Mammary epithelial cell (primary cell): ENCODE measurements at regions of chr2 and their contacts with region 1.

Region 1: DNA sequence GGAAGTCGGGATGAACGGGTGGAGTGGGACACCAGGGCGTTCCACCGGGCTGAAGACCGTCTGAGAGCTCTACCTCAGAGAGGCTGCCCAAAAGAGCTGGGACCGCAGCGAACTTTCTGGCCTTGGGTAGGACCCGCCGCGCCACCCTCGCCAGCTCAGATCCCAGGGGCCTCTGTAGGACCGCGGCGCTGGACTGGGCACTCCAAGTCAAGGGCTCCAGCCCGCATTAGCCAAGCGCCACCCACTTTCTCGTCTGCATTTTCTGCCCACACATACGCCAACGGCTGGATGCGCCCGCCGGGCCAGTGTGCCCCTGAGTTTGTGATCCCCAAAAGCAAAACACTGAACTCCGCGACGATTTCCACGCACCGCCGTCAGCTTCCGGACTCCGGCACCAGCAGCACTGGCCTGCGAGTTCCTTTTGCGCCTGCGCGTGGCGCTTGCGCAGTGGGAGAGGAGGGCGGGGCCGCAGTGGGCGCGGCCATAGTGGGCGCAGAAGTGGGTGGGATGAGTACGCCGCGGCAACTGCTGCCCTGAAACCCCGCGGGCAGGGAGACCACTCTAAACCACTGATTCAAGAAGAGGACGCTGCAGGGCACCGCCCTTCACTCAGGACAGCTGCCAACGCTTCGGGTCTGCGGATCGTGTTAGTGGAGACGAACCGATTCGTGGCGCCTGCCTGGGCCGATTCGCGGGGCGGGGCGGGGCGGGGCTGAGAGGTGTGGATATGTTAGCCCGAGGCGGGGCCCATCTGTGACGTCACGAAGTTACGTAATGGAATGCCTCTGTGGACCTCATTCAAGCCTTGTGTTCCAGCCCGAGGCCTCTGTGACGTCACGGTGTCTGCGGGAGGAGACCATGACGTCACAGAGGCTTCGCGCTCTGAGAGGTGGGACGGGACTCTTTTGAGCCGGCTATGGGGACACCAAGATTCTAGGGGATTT is 10.5 kb downstream of the OSR1 start:
- DNase-seq: peak; percentile 93
- H3K4me3 ChIP-seq: peak overlapping the region; percentile 55 to 89 (median 83)
- H3K27ac ChIP-seq: peak overlapping the region; percentile 91
- H3K4me1 ChIP-seq: peaks cover 5% of the 10 kb centered on the region
- H3K27me3 ChIP-seq: no peaks in the 10 kb centered on the region
- CTCF ChIP-seq: no peak

Region 2: DNA sequence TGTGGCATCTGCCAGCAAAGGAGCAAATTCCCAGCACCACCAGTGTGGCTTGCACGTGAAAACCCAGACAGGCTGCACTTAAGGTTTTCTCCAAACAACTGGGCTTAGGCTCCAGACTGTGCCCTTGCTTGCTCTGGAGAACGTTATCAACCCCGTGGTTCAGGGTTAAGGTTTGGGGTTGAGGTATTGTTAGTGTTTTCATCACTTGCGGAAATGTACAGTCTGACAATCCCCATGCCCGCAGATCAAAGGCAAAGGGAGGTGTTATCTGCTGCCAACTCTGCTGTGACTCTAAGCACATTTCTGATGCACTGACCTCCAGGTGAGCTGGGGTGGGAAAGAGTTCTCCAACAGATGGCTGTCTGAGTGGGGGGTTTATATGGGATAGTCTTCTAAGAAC is 505.1 kb before region 1 on chr2:
- CTCF ChIA-PET with region 1: no interaction called
- dilution Hi-C with region 1: no loop called
- in situ Hi-C with region 1: no loop called
- intact Hi-C with region 1: loop called (anchors 1 kb)
- DNase-seq: no peak
- H3K4me3 ChIP-seq: no peak overlapping the region
- H3K27ac ChIP-seq: no peak overlapping the region
- H3K4me1 ChIP-seq: no peaks in the 10 kb centered on the region
- H3K27me3 ChIP-seq: no peaks in the 10 kb centered on the region
- CTCF ChIP-seq: no peak

Region 3: GRCh38 chr2:18871430-18871829 is 476.5 kb before region 1 on chr2:
- CTCF ChIA-PET with region 1: no interaction called
- dilution Hi-C with region 1: no loop called
- in situ Hi-C with region 1: loop called in 1 of 2 experiments (anchors 10 kb)
- intact Hi-C with region 1: no loop called
- DNase-seq: peak; percentile 72
- H3K4me3 ChIP-seq: no peak overlapping the region
- H3K27ac ChIP-seq: no peak overlapping the region
- H3K4me1 ChIP-seq: peaks cover 6% of the 10 kb centered on the region
- H3K27me3 ChIP-seq: no peaks in the 10 kb centered on the region
- CTCF ChIP-seq: no peak

Region 4: GRCh38 chr2:19235308-19235707 is 112.6 kb before region 1 on chr2:
- CTCF ChIA-PET with region 1: no interaction called
- dilution Hi-C with region 1: no loop called
- in situ Hi-C with region 1: no loop called
- intact Hi-C with region 1: loop called (anchors 10 kb)
- DNase-seq: peak; percentile 90
- H3K4me3 ChIP-seq: no peak overlapping the region
- H3K27ac ChIP-seq: peak overlapping the region; percentile 68
- H3K4me1 ChIP-seq: peaks cover 26% of the 10 kb centered on the region
- H3K27me3 ChIP-seq: no peaks in the 10 kb centered on the region
- CTCF ChIP-seq: no peak

Region 5: GRCh38 chr2:19392221-19392620 is 44.3 kb after region 1 on chr2:
- CTCF ChIA-PET with region 1: no interaction called
- dilution Hi-C with region 1: no loop called
- in situ Hi-C with region 1: no loop called
- intact Hi-C with region 1: no loop called
- DNase-seq: no peak
- H3K4me3 ChIP-seq: no peak overlapping the region
- H3K27ac ChIP-seq: no peak overlapping the region
- H3K4me1 ChIP-seq: no peaks in the 10 kb centered on the region
- H3K27me3 ChIP-seq: no peaks in the 10 kb centered on the region
- CTCF ChIP-seq: no peak